ENCODE measurements at regions of chr14 and their contacts with region 1.

Region 1: DNA sequence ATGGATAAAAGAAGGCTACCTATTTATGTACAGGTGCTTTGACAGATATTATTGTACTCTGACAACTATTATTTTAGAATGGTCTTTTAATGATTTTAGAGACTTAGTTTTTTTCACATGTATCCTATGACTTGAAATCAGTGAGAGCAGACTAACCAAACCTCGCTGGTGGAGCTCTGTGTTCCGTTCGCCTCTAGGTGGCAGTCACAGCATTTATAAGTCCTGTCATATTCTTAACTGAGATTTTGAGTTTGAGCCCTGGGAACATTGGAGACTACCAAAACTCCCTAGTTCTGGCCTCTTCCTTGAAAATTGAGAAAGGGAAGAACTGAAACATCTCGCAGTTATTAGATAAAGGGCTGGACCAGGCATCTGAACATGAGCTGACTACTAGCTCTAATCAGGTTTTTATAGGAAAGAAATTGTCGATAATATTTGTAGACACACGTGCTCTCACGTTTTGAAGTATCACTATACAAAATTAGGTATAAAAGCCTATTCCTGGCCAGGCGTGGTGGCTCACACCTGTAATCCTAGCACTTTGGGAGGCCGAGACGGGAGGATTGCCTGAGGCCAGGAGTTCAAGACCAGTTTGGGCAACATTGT is 48.3 kb downstream of the TTLL5 start:
- DNase-seq: peak; percentile 72 to 94 (median 85)
- H3K4me3 ChIP-seq: no peak overlapping the region
- H3K27ac ChIP-seq: no peak overlapping the region
- H3K4me1 ChIP-seq: peaks cover 6 to 19% of the 10 kb centered on the region in 2 donors
- H3K27me3 ChIP-seq: no peaks in the 10 kb centered on the region
- CTCF ChIP-seq: peak; percentile 67 to 88 (median 76)
- POLR2A ChIP-seq: no peak

Region 2: GRCh38 chr14:75783184-75783583 is 73.9 kb after region 1 on chr14:
- intact Hi-C with region 1: loop called in 1 of 2 experiments (anchors 10 kb)
- DNase-seq: peak in 6 of 7 donors; percentile 23 to 62 (median 53)
- H3K4me3 ChIP-seq: no peak overlapping the region
- H3K27ac ChIP-seq: peak overlapping the region in 1 of 5 donors; percentile 7
- H3K4me1 ChIP-seq: peaks cover 5 to 20% of the 10 kb centered on the region in 2 donors
- H3K27me3 ChIP-seq: no peaks in the 10 kb centered on the region
- CTCF ChIP-seq: no peak
- POLR2A ChIP-seq: no peak

Region 3: DNA sequence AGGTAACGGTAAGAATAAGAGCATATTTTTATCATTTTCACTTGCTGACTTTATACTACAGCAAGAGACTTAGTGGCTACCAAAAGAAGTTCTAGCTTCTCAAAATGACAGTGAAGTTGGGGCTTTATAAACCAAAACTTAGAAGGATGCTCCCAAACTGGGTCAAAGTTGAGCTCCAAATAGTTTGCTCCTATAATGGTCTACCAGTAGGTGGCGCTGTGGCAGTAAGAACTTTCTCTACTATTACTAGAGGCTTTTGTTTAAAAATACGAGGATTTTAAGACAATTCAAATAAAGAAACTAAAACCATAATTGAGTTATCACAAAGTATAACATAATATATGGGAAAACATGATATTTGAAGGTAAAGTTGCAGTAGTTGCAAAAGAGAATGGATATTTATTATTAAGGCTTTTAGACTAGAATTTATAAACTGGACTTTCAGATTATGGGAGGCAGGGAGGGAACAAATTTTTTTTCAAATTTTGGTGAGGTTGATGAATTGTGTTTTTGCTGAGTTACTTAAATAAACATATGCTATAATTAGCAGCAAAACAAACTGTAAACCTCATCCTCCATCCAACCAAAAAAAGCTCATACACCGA is 197.5 kb after region 1 on chr14:
- intact Hi-C with region 1: loop called in 1 of 2 experiments (anchors 10 kb)
- DNase-seq: peak; percentile 58 to 88 (median 78)
- H3K4me3 ChIP-seq: no peak overlapping the region
- H3K27ac ChIP-seq: peak overlapping the region in 1 of 5 donors; percentile 54
- H3K4me1 ChIP-seq: no peaks in the 10 kb centered on the region
- H3K27me3 ChIP-seq: no peaks in the 10 kb centered on the region
- CTCF ChIP-seq: peak; percentile 76 to 98 (median 86)
- POLR2A ChIP-seq: no peak

Region 4: DNA sequence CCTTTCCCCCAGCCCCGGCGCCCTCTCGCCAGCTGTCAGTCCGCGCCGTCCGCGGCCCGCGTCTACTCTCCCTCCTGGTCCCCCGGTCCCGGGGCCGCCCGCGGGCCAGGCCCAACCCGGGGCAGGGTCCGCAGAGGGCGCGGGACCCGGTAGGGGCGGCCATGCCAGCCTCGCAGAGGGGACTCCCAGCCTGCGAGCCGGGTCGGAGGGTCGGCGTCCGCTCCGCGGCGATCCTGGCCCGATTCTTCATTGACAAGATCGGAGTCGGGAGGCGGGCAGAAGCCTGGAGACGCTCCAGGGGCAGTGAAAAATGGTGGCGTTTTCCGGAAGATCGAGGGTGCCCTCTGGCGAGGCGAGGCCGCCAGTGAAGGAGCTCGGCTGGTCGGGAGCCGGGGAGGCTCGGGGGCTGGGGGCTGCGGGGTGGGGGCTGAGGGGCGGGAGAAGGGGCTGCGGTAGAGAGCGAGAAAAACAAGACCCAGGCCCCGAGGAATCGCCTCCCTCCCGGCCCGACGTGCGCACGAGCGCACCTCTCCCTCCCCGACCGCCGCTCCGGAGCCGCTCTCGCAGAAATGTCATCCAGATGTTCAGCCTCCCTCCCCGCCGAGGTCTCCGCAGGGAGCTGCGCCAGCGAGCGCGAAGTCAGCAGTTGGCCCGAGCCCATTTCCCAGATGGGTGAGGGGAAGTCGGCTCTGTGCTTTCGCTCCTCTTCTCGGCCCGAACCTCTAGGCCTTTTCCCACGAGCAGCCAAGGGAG is 273.1 kb after region 1 on chr14:
- intact Hi-C with region 1: loop called (anchors 5 kb)
- DNase-seq: peak; percentile 82 to 92 (median 86)
- H3K4me3 ChIP-seq: peak overlapping the region in 3 of 4 donors; percentile 68 to 83 (median 72)
- H3K27ac ChIP-seq: peak overlapping the region; percentile 92 to 97 (median 94)
- H3K4me1 ChIP-seq: peaks cover 18 to 42% of the 10 kb centered on the region in 2 donors
- H3K27me3 ChIP-seq: no peaks in the 10 kb centered on the region
- CTCF ChIP-seq: peak in 5 of 6 experiments; percentile 43 to 66 (median 57)
- POLR2A ChIP-seq: no peak

Measured in adrenal gland (tissue), 19 donors.